Vagina (tissue), 2 donors: ENCODE measurements at regions of chr4 and their contacts with region 1.

Region 1: GRCh38 chr4:163764569-163764968 is 270.1 kb downstream of the TMA16 start:
- DNase-seq: no peak
- H3K4me3 ChIP-seq: no peak overlapping the region
- H3K27ac ChIP-seq: no peak overlapping the region
- H3K4me1 ChIP-seq: no peaks in the 10 kb centered on the region
- H3K27me3 ChIP-seq: no peaks in the 10 kb centered on the region
- CTCF ChIP-seq: no peak
- POLR2A ChIP-seq: no peak

Region 2: GRCh38 chr4:163930086-163930485 is 165.5 kb after region 1 on chr4:
- intact Hi-C with region 1: no loop called
- DNase-seq: no peak
- H3K4me3 ChIP-seq: no peak overlapping the region
- H3K27ac ChIP-seq: no peak overlapping the region
- H3K4me1 ChIP-seq: no peaks in the 10 kb centered on the region
- H3K27me3 ChIP-seq: no peaks in the 10 kb centered on the region
- CTCF ChIP-seq: no peak
- POLR2A ChIP-seq: no peak

Region 3: DNA sequence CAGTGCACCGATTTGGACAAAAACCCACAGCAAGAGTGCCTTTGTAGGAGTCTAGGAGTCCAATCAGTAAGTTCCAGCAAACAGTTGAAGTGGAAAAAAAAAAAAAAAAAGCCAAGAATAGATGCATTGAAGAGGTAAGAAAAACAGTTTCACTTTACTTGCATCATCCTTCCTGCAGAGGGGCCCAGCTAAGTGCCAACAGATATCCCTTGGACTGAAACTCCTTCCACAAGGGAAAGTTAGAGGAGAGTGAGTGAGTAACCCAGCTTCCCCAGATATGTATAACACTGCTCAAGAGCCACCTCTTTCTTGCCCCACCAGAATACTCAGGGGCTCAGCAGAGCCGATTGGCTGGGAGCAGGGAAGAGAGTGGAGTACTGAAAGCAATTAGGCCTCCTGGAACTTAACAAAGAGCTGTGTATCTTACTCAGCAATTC is 371.6 kb after region 1 on chr4:
- intact Hi-C with region 1: no loop called
- DNase-seq: no peak
- H3K4me3 ChIP-seq: no peak overlapping the region
- H3K27ac ChIP-seq: no peak overlapping the region
- H3K4me1 ChIP-seq: no peaks in the 10 kb centered on the region
- H3K27me3 ChIP-seq: no peaks in the 10 kb centered on the region
- CTCF ChIP-seq: no peak
- POLR2A ChIP-seq: no peak

Region 4: GRCh38 chr4:164261831-164262230 is 497.3 kb after region 1 on chr4:
- intact Hi-C with region 1: loop called (anchors 5 kb)
- DNase-seq: no peak
- H3K4me3 ChIP-seq: no peak overlapping the region
- H3K27ac ChIP-seq: no peak overlapping the region
- H3K4me1 ChIP-seq: no peaks in the 10 kb centered on the region
- H3K27me3 ChIP-seq: no peaks in the 10 kb centered on the region
- CTCF ChIP-seq: no peak
- POLR2A ChIP-seq: no peak